ENCODE measurements at regions of chr11 and their contacts with region 1.

Region 1: DNA sequence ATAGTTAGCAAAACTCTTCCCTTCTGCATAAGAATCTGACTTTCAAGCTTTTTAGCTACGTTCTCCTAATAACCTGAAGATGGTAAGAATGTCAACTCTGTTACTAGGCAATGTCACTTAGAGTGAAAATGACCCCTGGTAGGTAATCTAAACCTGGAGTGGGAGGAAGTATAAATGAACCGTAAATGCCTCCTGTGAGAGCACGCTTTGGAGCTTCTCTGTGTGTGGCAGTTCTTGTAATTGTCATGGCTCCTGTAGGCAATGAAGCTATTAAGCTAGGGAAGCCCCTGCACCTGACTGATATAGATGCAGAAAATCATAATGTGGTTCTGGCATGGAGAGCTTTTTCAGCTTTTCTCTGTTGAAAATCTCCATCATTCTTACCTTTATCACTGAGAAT is 29.4 kb downstream of the CALCA start:
- DNase-seq: no peak
- ATAC-seq: no peak
- H3K4me3 ChIP-seq: no peak overlapping the region
- H3K27ac ChIP-seq: no peak overlapping the region
- H3K4me1 ChIP-seq: no peaks in the 10 kb centered on the region
- H3K27me3 ChIP-seq: no peaks in the 10 kb centered on the region
- CTCF ChIP-seq: no peak

Region 2: GRCh38 chr11:14722496-14722895 is 220.2 kb before region 1 on chr11:
- intact Hi-C with region 1: no loop called
- DNase-seq: no peak
- ATAC-seq: no peak
- H3K4me3 ChIP-seq: no peak overlapping the region
- H3K27ac ChIP-seq: no peak overlapping the region
- H3K4me1 ChIP-seq: no peaks in the 10 kb centered on the region
- H3K27me3 ChIP-seq: no peaks in the 10 kb centered on the region
- CTCF ChIP-seq: no peak

Region 3: GRCh38 chr11:14980854-14981253 is 38.1 kb after region 1 on chr11:
- intact Hi-C with region 1: no loop called
- DNase-seq: no peak
- ATAC-seq: peak in 6 of 8 donors; percentile 81 to 98 (median 94)
- H3K4me3 ChIP-seq: no peak overlapping the region
- H3K27ac ChIP-seq: peak overlapping the region in 3 of 10 donors; percentile 26 to 63 (median 61)
- H3K4me1 ChIP-seq: peaks cover 0 to 8% (median 0%) of the 10 kb centered on the region in 9 donors
- H3K27me3 ChIP-seq: peaks cover 0 to 39% (median 24%) of the 10 kb centered on the region in 7 donors
- CTCF ChIP-seq: no peak

Region 4: GRCh38 chr11:15006139-15006759 is 63.5 kb after region 1 on chr11:
- intact Hi-C with region 1: loop called in 1 of 10 experiments (anchors 10 kb)
- DNase-seq: no peak
- ATAC-seq: no peak
- H3K4me3 ChIP-seq: no peak overlapping the region
- H3K27ac ChIP-seq: no peak overlapping the region
- H3K4me1 ChIP-seq: no peaks in the 10 kb centered on the region
- H3K27me3 ChIP-seq: peaks cover 0 to 24% (median 8%) of the 10 kb centered on the region in 7 donors
- CTCF ChIP-seq: peak in 6 of 9 donors; percentile 10 to 42 (median 29)

Measured in heart right ventricle (tissue), 16 donors.